ENCODE measurements at regions of chr1 and their contacts with region 1.

Region 1: DNA sequence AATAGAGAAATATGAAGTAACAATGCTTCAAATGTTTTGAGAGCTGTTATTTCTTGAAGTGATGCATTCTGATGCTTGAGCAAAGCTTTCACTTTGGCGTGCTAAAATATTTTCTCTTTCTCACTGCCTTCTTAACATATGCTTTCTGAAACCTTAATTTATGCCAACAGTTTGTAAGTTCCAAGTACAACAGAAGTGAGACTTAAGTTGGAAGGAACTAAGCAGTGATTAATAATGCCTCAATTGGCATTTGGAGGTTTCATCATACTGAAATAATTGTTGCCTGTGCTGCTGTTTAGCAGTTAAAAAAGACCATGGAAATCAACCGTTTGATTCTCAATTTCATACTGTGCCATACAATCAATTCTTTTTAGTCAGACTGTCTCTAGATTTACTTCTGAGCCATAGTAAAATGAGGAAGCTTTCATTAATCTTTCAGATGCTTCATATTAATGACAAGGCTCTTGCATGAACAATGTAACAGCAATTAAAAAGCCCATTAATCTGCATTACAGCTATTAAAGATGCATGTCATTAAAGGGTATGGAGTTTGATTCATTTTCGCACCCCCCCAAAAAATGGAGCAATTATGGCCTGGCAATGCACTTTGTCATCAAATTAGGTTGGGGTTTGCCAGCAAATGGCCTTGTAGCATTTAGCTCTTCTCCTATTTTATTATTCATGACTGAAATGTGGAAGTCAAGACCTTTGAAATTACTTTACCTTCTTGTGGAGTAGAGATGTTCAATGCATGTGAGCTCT is 375.3 kb downstream of the USH2A start:
- DNase-seq: no peak
- H3K4me3 ChIP-seq: no peak overlapping the region
- H3K27ac ChIP-seq: no peak overlapping the region
- H3K4me1 ChIP-seq: peaks cover 10% of the 10 kb centered on the region
- H3K27me3 ChIP-seq: no peaks in the 10 kb centered on the region
- CTCF ChIP-seq: no peak

Region 2: DNA sequence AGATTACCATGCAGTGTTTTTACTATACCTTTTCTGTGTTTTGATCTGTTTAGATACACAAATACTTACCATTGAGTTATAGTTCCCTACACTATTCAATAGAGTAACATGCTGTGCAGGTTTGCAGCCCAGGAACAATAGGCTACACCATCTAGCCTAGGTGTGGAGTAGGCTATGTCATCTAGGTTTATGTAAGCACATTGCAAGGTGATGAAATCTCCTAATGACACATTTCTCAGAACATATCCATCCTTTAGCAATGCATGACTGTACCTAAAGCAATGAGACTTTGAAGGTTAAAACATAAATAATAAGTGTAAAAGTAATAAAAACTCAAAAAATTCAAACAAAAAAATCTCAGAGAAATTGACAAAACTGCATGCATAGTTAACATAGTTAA is 16.7 kb after region 1 on chr1:
- CTCF ChIA-PET with region 1: no interaction called
- dilution Hi-C with region 1: no loop called
- in situ Hi-C with region 1: no loop called
- intact Hi-C with region 1: loop called (anchors 2 kb)
- DNase-seq: peak; percentile 33
- H3K4me3 ChIP-seq: no peak overlapping the region
- H3K27ac ChIP-seq: no peak overlapping the region
- H3K4me1 ChIP-seq: no peaks in the 10 kb centered on the region
- H3K27me3 ChIP-seq: peaks cover 2% of the 10 kb centered on the region
- CTCF ChIP-seq: no peak

Region 3: DNA sequence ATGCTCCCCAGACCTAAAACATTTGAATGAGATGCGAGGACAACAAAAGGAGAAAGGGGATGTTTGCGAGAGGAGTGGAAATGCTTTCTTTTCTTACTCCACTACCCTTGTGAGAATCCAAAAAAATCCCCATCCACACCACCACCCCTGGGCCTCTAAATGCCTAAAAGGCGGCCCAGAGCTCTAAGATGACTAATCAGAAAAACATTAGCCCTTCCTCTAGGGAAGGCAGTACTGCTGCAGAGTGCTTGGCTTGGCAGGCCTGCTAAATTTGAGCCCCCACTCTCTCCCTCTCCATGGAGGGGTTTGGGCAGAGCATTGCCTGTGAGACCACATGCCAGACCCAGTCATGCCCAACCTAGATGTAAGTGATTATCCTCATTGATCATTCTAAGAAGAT is 27.3 kb after region 1 on chr1:
- CTCF ChIA-PET with region 1: no interaction called
- dilution Hi-C with region 1: no loop called
- in situ Hi-C with region 1: no loop called
- intact Hi-C with region 1: no loop called
- DNase-seq: no peak
- H3K4me3 ChIP-seq: no peak overlapping the region
- H3K27ac ChIP-seq: no peak overlapping the region
- H3K4me1 ChIP-seq: no peaks in the 10 kb centered on the region
- H3K27me3 ChIP-seq: no peaks in the 10 kb centered on the region
- CTCF ChIP-seq: no peak

Region 4: DNA sequence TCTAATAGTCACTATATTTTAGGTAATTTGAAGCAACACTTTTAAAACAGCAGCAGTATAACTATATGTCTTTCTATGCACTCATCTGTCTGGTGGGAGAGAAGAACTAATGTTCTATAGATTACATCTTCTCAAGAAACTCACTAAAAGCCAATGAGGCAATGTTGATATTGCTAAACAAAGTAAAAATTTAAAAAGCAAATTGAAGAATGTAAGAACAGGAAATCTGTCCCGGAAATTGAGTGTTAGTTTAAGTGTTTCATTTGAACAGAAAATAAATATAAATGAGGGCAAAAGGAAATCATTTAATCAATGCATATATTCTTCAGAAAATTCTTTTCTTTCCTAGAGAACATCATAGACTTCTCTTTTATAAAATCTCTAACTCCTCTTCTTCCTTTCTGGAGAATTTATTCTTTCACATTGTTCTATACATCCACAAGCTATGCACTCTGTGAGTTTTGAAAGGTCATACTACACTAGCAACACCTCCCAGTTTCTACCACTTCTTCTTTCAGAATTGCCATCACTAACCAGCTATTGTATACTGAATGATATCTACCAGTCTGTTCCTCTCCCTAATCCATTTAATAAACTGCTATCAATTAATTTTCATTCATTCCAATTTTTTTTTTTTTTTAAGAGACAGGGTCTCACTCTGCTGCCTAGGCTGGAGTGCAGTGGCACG is 222.2 kb after region 1 on chr1:
- CTCF ChIA-PET with region 1: no interaction called
- dilution Hi-C with region 1: no loop called
- in situ Hi-C with region 1: no loop called
- intact Hi-C with region 1: no loop called
- DNase-seq: no peak
- H3K4me3 ChIP-seq: no peak overlapping the region
- H3K27ac ChIP-seq: no peak overlapping the region
- H3K4me1 ChIP-seq: no peaks in the 10 kb centered on the region
- H3K27me3 ChIP-seq: peaks cover 2% of the 10 kb centered on the region
- CTCF ChIP-seq: no peak

Region 5: GRCh38 chr1:216606047-216606637 is 558.1 kb after region 1 on chr1:
- CTCF ChIA-PET with region 1: no interaction called
- dilution Hi-C with region 1: no loop called
- in situ Hi-C with region 1: no loop called
- intact Hi-C with region 1: no loop called
- DNase-seq: no peak
- H3K4me3 ChIP-seq: no peak overlapping the region
- H3K27ac ChIP-seq: no peak overlapping the region
- H3K4me1 ChIP-seq: no peaks in the 10 kb centered on the region
- H3K27me3 ChIP-seq: no peaks in the 10 kb centered on the region
- CTCF ChIP-seq: no peak